ENCODE measurements at regions of chr7 and their contacts with region 1.

Region 1: GRCh38 chr7:4631664-4632171 is 50.4 kb upstream of the FOXK1 start:
- DNase-seq: peak; percentile 78 to 92 (median 90)
- H3K4me3 ChIP-seq: peak overlapping the region in 1 of 4 donors; percentile 15
- H3K27ac ChIP-seq: peak overlapping the region in 2 of 5 donors; percentile 66 to 80
- H3K4me1 ChIP-seq: peaks cover 0 to 14% of the 10 kb centered on the region in 2 donors
- H3K27me3 ChIP-seq: peaks cover 4% of the 10 kb centered on the region
- CTCF ChIP-seq: peak; percentile 39 to 91 (median 84)
- POLR2A ChIP-seq: no peak

Region 2: DNA sequence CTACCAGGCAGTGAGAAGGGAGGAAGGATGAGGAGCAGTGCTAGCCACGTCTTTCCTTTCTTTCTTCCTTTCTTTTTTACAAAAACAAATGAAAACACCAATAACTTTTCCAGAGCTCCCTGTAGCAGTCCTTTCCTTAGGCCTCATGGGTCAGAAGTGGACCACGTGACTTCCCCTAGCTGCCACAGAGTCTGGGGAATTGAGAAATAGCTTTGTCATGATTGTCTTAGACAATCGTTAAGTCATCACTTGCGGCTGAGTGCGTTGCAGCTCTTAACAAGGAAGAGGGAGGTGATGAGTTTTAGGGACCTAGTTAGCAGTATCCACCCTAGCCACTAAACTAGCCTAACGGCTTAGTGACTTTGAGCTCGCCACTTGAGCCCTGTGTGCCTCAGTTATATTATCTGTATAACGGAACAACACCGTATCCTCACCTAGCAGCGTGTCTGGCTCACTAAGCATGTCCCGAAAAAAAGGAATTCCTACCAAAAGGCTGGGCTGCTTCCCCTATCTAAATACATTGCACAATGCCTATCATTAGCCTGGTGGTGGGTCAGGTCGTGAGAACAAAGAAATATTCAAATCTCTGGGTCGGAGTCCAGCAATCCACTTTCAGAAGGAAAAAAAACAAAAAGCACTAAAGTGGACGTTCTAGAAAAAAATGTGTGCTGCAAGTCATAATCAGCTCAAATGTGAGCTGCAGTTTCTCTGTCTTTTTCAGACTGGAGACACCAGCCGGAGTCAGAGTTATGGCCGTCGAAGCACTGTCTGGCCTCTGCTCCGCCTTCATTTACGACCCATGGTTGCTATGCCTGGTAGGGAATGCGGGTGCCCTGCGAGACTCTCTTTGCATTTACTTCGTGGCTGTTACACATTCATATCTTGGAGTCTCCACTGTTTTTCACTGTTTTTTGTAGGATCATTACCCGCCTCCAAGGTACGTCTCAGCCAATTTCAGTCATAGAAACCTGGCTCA is 288.2 kb before region 1 on chr7:
- intact Hi-C with region 1: no loop called
- DNase-seq: no peak
- H3K4me3 ChIP-seq: no peak overlapping the region
- H3K27ac ChIP-seq: no peak overlapping the region
- H3K4me1 ChIP-seq: no peaks in the 10 kb centered on the region
- H3K27me3 ChIP-seq: no peaks in the 10 kb centered on the region
- CTCF ChIP-seq: no peak
- POLR2A ChIP-seq: no peak

Region 3: GRCh38 chr7:4610768-4611467 is 20.8 kb before region 1 on chr7:
- intact Hi-C with region 1: loop called in 1 of 2 experiments (anchors 2 kb)
- DNase-seq: peak; percentile 40 to 78 (median 59)
- H3K4me3 ChIP-seq: no peak overlapping the region
- H3K27ac ChIP-seq: no peak overlapping the region
- H3K4me1 ChIP-seq: peaks cover 0 to 12% of the 10 kb centered on the region in 2 donors
- H3K27me3 ChIP-seq: no peaks in the 10 kb centered on the region
- CTCF ChIP-seq: peak; percentile 69 to 93 (median 84)
- POLR2A ChIP-seq: no peak

Measured in adrenal gland (tissue), 19 donors.